Esophagus muscularis mucosa (tissue), 4 donors: ENCODE measurements at regions of chr1 and their contacts with region 1.

Region 1: GRCh38 chr1:231421993-231422764 is at the start of gene EGLN1:
- DNase-seq: peak; percentile 94
- H3K4me3 ChIP-seq: peak within 1 kb of the TSS; percentile 91 to 94 (median 92)
- H3K27ac ChIP-seq: peak within 1 kb of the TSS; percentile 98 to 99 (median 99)
- H3K4me1 ChIP-seq: peaks cover 42 to 47% (median 42%) of the 10 kb centered on the region in 4 donors
- H3K27me3 ChIP-seq: no peaks in the 10 kb centered on the region
- CTCF ChIP-seq: peak in 2 of 3 experiments; percentile 29 to 35
- EP300 ChIP-seq: no peak
- POLR2A ChIP-seq: peak; percentile 69
- total RNA-seq, gene EGLN1: 43.9 to 79.9 (median 58.7) TPM

Region 2: GRCh38 chr1:231211005-231211857 is 210.9 kb before region 1 on chr1:
- intact Hi-C with region 1: no loop called
- DNase-seq: no peak
- H3K4me3 ChIP-seq: peak overlapping the region; percentile 35 to 54 (median 48)
- H3K27ac ChIP-seq: no peak overlapping the region
- H3K4me1 ChIP-seq: peaks cover 0 to 8% (median 7%) of the 10 kb centered on the region in 4 donors
- H3K27me3 ChIP-seq: peaks cover 0 to 36% (median 0%) of the 10 kb centered on the region in 4 donors
- CTCF ChIP-seq: peak; percentile 73 to 95 (median 81)
- EP300 ChIP-seq: no peak
- POLR2A ChIP-seq: no peak

Region 3: DNA sequence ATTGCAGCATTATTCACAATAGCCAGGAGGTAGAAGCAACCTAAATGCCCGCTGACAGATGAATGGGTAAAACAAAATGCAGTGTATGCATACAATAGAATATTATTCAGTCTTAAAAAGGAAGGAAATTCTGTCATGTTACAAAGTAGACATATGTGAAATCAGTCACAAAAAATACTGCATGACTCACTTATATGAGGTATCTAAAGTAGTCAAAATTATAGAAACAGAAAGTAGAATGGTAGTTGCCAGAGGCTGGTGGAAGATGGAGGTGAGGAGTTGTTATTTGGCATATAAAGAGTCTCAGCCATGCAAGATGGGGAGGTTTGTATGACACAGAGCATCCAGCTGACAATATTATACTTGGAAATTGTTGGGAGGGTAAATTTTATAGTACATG is 42.9 kb after region 1 on chr1:
- intact Hi-C with region 1: no loop called
- DNase-seq: no peak
- H3K4me3 ChIP-seq: no peak overlapping the region
- H3K27ac ChIP-seq: no peak overlapping the region
- H3K4me1 ChIP-seq: no peaks in the 10 kb centered on the region
- H3K27me3 ChIP-seq: peaks cover 0 to 4% (median 0%) of the 10 kb centered on the region in 4 donors
- CTCF ChIP-seq: no peak
- EP300 ChIP-seq: no peak
- POLR2A ChIP-seq: no peak

Region 4: DNA sequence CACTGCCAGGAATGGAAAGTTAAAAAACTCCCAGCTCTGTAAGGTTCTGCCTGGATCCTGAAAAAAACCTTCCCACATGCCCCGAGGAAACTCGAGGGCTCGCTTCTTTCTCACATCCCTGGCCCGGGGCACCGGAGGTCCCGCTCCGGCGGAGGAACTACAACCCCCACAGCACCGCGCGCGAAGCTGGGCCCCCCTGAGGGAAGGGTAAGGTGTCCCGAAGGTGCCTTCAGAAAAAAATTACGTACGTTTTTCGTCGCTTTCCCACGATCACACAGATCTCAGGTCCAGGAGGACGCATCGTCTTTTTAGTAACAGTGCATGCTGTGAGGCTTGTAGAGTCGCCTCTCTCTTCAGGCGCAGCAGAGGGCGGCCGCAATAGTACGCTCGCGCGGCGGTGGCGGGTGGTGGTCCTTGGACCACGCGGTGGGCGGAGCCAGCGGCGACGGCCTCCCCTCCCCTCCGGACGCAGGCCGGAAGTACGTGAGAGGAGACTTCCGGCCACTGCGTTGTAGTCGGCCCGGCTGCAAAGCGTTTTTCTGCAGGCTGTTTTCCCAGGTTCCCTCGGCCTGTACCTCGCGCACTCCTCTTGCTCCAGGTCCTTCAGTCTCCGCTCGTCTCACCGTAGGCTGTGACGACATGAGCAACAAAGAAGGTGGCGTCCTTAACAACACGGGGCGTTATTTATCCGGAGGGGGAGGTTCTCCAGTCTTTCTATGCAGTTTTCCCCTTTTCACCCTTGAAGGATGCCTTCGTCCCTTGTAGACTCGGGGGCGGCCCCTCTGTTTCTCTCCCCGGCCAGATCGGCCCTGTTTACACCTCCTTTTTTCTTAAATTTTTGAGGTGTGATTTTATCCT is 106.2 kb after region 1 on chr1 and contains the start of gene TSNAX:
- intact Hi-C with region 1: loop called (anchors 5 kb)
- DNase-seq: peak; percentile 97
- H3K4me3 ChIP-seq: peak within 1 kb of the TSS; percentile 63 to 83 (median 75)
- H3K27ac ChIP-seq: peak within 1 kb of the TSS; percentile 90 to 94 (median 92)
- H3K4me1 ChIP-seq: peaks cover 24 to 50% (median 47%) of the 10 kb centered on the region in 4 donors
- H3K27me3 ChIP-seq: no peaks in the 10 kb centered on the region
- CTCF ChIP-seq: no peak
- EP300 ChIP-seq: no peak
- POLR2A ChIP-seq: peak; percentile 83
- total RNA-seq, gene TSNAX: 20.4 to 29.6 (median 24.7) TPM

Region 5: GRCh38 chr1:231603598-231604275 is 181.6 kb after region 1 on chr1:
- intact Hi-C with region 1: loop called (anchors 5 kb)
- DNase-seq: no peak
- H3K4me3 ChIP-seq: peak overlapping the region; percentile 44 to 54 (median 53)
- H3K27ac ChIP-seq: peak overlapping the region in 1 of 4 donors; percentile 42
- H3K4me1 ChIP-seq: peaks cover 6 to 35% (median 25%) of the 10 kb centered on the region in 4 donors
- H3K27me3 ChIP-seq: no peaks in the 10 kb centered on the region
- CTCF ChIP-seq: peak; percentile 73 to 86 (median 81)
- EP300 ChIP-seq: no peak
- POLR2A ChIP-seq: no peak